ENCODE measurements at regions of chr22 and their contacts with region 1.

Region 1: DNA sequence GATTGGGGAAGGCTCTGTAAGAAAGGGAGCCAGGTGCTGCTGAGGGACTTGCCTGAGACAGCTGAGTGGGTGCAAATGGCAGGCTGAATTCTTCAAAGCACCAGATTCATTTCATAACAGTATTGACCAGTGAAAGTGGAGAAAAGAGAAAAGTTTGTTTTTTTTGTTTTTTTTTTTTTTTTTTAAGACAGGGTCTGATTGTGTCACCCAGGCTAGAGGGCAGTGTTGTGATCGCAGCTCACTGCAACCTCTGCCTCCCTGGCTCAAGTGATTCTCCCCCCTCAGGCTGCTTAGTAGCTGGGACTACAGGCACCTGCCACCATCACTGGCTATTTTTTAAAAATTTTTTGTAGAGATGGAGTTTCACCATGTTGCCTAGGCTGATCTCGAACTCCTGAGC is 494.0 kb downstream of the MIAT start:
- DNase-seq: no peak
- ATAC-seq: peak; percentile 41; the same call in 1 of the 2 replicates
- H3K4me3 Mint-ChIP-seq: no peak overlapping the region
- H3K27ac Mint-ChIP-seq: no peak overlapping the region
- H3K4me1 Mint-ChIP-seq: no peaks in the 10 kb centered on the region
- H3K27me3 Mint-ChIP-seq: no peaks in the 10 kb centered on the region
- CTCF ChIP-seq: no peak

Region 2: GRCh38 chr22:28204382-28204781 is 1053.0 kb after region 1 on chr22:
- CTCF ChIA-PET with region 1: no interaction called
- POLR2A ChIA-PET with region 1: interaction called, 12 read pairs
- DNase-seq: no peak
- ATAC-seq: no peak
- H3K4me3 Mint-ChIP-seq: no peak overlapping the region
- H3K27ac Mint-ChIP-seq: no peak overlapping the region
- H3K4me1 Mint-ChIP-seq: peaks cover 10% of the 10 kb centered on the region
- H3K27me3 Mint-ChIP-seq: peaks cover 22% of the 10 kb centered on the region
- CTCF ChIP-seq: no peak

Measured in WTC11 (cell line).